ENCODE measurements at regions of chr6 and their contacts with region 1.

Region 1: DNA sequence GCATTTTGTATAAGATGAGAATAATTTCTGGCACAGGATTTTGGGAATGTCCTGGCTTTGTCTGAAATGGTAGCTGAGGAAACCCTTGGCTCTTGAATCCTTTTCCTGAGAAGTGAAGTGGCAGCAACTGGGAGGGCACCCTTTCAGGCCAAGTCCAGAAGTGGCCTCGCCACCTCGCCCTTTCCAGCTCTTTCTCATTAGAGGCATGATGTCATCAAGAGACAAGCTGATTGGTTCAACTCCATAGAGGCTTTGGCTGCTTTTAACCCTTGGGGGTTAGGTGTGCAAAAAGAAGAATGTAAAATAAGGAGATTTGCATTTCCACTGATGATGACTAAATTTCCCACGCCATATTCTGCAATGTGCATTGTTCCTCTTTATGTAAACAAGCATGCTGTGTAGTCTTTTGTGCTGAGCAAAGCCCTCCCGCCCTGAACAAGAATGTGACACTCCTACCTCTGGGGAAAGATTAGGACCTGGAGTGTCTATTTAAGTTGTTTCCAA is 116.5 kb downstream of the TCP11 start:
- DNase-seq: peak; percentile 90
- H3K4me3 ChIP-seq: no peak overlapping the region
- H3K27ac ChIP-seq: peak overlapping the region; percentile 95
- H3K4me1 ChIP-seq: peaks cover 32% of the 10 kb centered on the region
- H3K27me3 ChIP-seq: no peaks in the 10 kb centered on the region
- CTCF ChIP-seq: no peak

Region 2: GRCh38 chr6:35081426-35081851 is 56.8 kb after region 1 on chr6:
- CTCF ChIA-PET with region 1: no interaction called
- dilution Hi-C with region 1: no loop called
- in situ Hi-C with region 1: no loop called
- intact Hi-C with region 1: loop called (anchors 2 kb)
- DNase-seq: peak; percentile 49
- H3K4me3 ChIP-seq: peak overlapping the region in 2 of 3 experiments; percentile 23 to 29
- H3K27ac ChIP-seq: peak overlapping the region; percentile 66
- H3K4me1 ChIP-seq: peaks cover 51% of the 10 kb centered on the region
- H3K27me3 ChIP-seq: no peaks in the 10 kb centered on the region
- CTCF ChIP-seq: no peak

Region 3: DNA sequence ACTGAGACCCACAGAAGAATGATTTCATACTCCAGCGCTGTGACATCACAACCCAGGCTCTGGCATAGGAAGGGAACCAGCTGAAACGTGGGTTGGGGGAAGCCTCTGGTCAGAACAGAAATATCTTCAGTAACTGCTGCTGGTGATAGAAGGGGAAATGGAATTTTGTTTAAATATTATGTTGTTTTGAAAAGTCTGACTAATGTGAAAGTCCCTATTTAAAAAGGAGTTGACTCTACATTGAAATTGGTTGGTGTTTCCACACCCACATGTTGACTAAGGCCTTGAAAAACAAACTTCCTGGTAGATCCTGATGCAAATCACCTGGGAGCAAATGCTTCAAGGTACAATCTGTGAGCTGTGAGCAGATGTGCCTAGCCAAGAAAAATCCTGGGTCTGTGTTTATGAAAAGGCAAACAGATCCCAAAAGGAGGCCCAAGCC is 141.0 kb after region 1 on chr6:
- CTCF ChIA-PET with region 1: no interaction called
- dilution Hi-C with region 1: no loop called
- in situ Hi-C with region 1: no loop called
- intact Hi-C with region 1: no loop called
- DNase-seq: peak; percentile 66
- H3K4me3 ChIP-seq: no peak overlapping the region
- H3K27ac ChIP-seq: no peak overlapping the region
- H3K4me1 ChIP-seq: peaks cover 3% of the 10 kb centered on the region
- H3K27me3 ChIP-seq: no peaks in the 10 kb centered on the region
- CTCF ChIP-seq: no peak

Measured in mammary epithelial cell (primary cell).